ENCODE measurements at regions of chrX and their contacts with region 1.

Region 1: GRCh38 chrX:36867143-36867542 is 141.0 kb upstream of the FAM47C start:
- DNase-seq: no peak
- H3K4me3 ChIP-seq: no peak overlapping the region
- H3K27ac ChIP-seq: no peak overlapping the region
- H3K4me1 ChIP-seq: no peaks in the 10 kb centered on the region
- H3K27me3 ChIP-seq: no peaks in the 10 kb centered on the region
- CTCF ChIP-seq: peak; percentile 56

Region 2: DNA sequence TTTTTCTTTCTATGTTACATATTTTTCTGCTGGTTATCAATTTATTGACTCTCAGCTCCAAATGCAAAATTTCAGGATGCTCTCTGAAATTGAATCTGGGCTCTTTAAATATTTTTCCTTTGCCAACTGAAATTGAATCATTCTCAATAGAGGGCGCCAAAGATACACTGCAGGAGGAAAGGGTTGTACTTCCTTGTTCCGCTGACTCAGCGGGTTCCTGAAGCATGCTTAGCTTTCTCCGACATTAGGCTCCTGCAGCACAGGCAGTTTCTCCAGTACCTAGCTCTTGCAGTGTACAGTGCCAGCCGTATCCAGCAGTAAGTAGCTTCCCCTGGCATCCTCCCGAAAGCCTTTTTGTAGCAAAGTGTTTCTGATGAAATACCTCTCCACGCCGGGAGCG is 976.4 kb before region 1 on chrX:
- intact Hi-C with region 1: loop called (anchors 10 kb)
- DNase-seq: peak; percentile 48
- H3K4me3 ChIP-seq: no peak overlapping the region
- H3K27ac ChIP-seq: no peak overlapping the region
- H3K4me1 ChIP-seq: no peaks in the 10 kb centered on the region
- H3K27me3 ChIP-seq: no peaks in the 10 kb centered on the region
- CTCF ChIP-seq: peak; percentile 60

Region 3: DNA sequence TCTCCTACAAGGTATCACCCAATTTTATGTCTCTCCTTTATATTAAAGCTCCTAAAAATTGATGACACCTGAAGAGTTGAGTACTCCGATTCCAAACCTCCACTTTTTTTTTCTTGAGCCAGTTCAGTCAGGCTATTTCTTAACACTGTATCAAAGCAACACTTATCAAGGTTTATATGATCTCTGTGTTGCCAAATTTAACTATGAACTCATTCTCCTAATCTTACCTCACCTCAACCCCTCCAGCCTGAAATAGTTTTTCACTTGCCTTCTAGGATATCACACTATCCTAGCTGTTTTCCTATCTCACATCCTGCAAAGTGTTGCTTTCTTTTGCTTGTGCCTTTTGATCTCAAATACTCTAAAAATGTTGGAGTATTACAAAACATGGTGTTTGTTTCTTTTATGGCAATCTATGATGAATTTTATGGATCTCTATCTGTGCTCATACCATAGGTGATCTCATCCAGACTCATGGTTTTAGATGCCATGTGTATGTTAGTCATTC is 532.6 kb before region 1 on chrX:
- intact Hi-C with region 1: loop called (anchors 10 kb)
- DNase-seq: no peak
- H3K4me3 ChIP-seq: no peak overlapping the region
- H3K27ac ChIP-seq: no peak overlapping the region
- H3K4me1 ChIP-seq: no peaks in the 10 kb centered on the region
- H3K27me3 ChIP-seq: no peaks in the 10 kb centered on the region
- CTCF ChIP-seq: no peak

Measured in colonic mucosa (tissue), 4 donors.